ENCODE measurements at regions of chr2 and their contacts with region 1.

Region 1: GRCh38 chr2:239380831-239381708 is 19.8 kb downstream of the HDAC4 start:
- DNase-seq: peak; percentile 90
- ATAC-seq: peak; percentile 57
- H3K4me3 ChIP-seq: peak overlapping the region; percentile 46 to 58 (median 46)
- H3K4me3 Mint-ChIP-seq: peak overlapping the region; percentile 86
- H3K27ac ChIP-seq: peak overlapping the region; percentile 91 to 94
- H3K27ac Mint-ChIP-seq: peak overlapping the region; percentile 90
- H3K4me1 ChIP-seq: peaks cover 19 to 50% of the 10 kb centered on the region in 2 donors
- H3K4me1 Mint-ChIP-seq: peaks cover 45% of the 10 kb centered on the region
- H3K27me3 ChIP-seq: no peaks in the 10 kb centered on the region
- H3K27me3 Mint-ChIP-seq: no peaks in the 10 kb centered on the region
- CTCF ChIP-seq: no peak

Region 2: GRCh38 chr2:239293775-239294430 is 87.2 kb before region 1 on chr2:
- CTCF ChIA-PET with region 1: interaction called, 4 read pairs
- POLR2A ChIA-PET with region 1: interaction called, 3 read pairs
- intact Hi-C with region 1: loop called (anchors 5 kb)
- DNase-seq: peak; percentile 70
- ATAC-seq: peak; percentile 73
- H3K4me3 ChIP-seq: no peak overlapping the region
- H3K4me3 Mint-ChIP-seq: peak overlapping the region; percentile 48
- H3K27ac ChIP-seq: no peak overlapping the region
- H3K27ac Mint-ChIP-seq: no peak overlapping the region
- H3K4me1 ChIP-seq: peaks cover 29 to 54% of the 10 kb centered on the region in 2 donors
- H3K4me1 Mint-ChIP-seq: peaks cover 67% of the 10 kb centered on the region
- H3K27me3 ChIP-seq: peaks cover 0 to 8% (median 0%) of the 10 kb centered on the region in 4 experiments
- H3K27me3 Mint-ChIP-seq: peaks cover 3% of the 10 kb centered on the region
- CTCF ChIP-seq: no peak

Region 3: GRCh38 chr2:239348563-239349447 is 32.3 kb before region 1 on chr2:
- CTCF ChIA-PET with region 1: no interaction called
- POLR2A ChIA-PET with region 1: no interaction called
- intact Hi-C with region 1: no loop called
- DNase-seq: no peak
- ATAC-seq: no peak
- H3K4me3 ChIP-seq: no peak overlapping the region
- H3K4me3 Mint-ChIP-seq: no peak overlapping the region
- H3K27ac ChIP-seq: no peak overlapping the region
- H3K27ac Mint-ChIP-seq: no peak overlapping the region
- H3K4me1 ChIP-seq: no peaks in the 10 kb centered on the region
- H3K4me1 Mint-ChIP-seq: no peaks in the 10 kb centered on the region
- H3K27me3 ChIP-seq: no peaks in the 10 kb centered on the region
- H3K27me3 Mint-ChIP-seq: no peaks in the 10 kb centered on the region
- CTCF ChIP-seq: no peak

Region 4: DNA sequence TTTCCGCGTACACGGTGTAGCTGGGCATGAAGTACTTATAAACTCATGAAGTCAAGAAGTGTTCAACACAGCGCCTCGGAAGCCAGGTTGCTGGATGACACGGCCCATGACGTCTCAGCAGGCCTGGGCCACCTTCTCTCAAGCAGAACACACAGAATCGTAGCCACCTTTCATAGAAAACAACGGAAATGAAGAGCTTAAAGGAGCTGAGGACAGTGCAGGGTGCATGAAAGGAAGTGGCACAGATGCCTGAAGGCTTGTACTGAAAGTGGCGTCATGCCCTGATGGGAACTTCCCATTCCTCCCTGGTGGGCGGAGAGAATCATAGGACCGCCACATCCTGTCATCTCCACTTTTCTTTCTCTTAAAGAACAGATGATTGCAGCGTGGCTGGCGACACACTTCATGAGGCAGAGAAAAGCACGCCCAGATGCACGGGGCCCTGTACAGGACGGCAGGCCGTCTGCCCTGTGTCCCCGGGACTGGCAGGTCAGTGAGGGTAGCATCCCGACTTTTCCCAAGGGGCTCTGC is 11.4 kb before region 1 on chr2:
- CTCF ChIA-PET with region 1: interaction called, 27 read pairs
- POLR2A ChIA-PET with region 1: interaction called, 13 read pairs
- intact Hi-C with region 1: loop called (anchors 1 kb)
- DNase-seq: peak; percentile 95
- ATAC-seq: peak; percentile 90
- H3K4me3 ChIP-seq: peak overlapping the region in 4 of 5 experiments; percentile 30 to 57 (median 40)
- H3K4me3 Mint-ChIP-seq: peak overlapping the region; percentile 80
- H3K27ac ChIP-seq: peak overlapping the region; percentile 90 to 91
- H3K27ac Mint-ChIP-seq: peak overlapping the region; percentile 88
- H3K4me1 ChIP-seq: peaks cover 20 to 32% of the 10 kb centered on the region in 2 donors
- H3K4me1 Mint-ChIP-seq: peaks cover 15% of the 10 kb centered on the region
- H3K27me3 ChIP-seq: no peaks in the 10 kb centered on the region
- H3K27me3 Mint-ChIP-seq: no peaks in the 10 kb centered on the region
- CTCF ChIP-seq: no peak